HCT116 (cell line): ENCODE measurements at regions of chr12 and their contacts with region 1.

Region 1: DNA sequence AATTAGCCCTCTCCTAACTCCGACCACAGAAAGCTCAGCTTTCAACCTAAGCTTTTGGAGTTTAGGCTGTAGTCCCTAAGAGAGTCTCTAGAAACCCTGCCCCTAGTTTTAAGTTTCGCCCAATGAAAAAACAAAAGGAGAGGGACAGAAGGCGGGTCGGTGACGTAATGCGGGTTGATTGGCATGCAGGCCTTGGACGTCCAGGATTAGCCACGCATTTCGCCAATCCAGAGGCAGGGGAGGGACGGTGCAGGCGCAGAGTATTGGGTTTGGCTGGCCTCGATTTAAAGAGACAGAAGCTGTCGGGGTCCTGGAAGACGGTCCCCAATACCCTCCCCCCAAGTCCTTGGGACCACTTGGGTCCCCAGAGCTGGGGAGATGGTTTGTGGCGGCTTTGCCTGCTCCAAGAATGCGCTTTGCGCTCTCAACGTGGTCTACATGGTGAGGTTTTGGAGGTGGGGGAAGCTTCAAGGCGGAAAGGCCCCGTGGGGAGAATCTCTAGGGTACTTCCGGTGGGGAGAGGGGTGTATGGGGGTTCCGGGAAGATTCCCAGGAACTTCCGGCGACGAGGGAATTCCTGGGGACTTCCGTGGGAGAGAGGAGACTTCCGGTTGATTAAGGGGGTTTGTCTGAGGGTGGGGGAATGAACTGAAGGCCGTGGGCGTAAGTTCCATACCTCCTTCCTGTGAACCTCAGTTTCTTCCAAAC is at the start of gene TSPAN31:
- DNase-seq: peak; percentile 98
- ATAC-seq: peak; percentile 83
- H3K4me3 ChIP-seq: peak within 1 kb of the TSS; percentile 69 to 76
- H3K27ac ChIP-seq: peak within 1 kb of the TSS; percentile 76
- H3K4me1 ChIP-seq: peaks cover 10 to 36% of the 10 kb centered on the region in 2 experiments; a peak in 3 of 4 replicates
- H3K27me3 ChIP-seq: no peaks in the 10 kb centered on the region
- CTCF ChIP-seq: no peak
- POLR2A ChIP-seq: peak; percentile 49
- RAD21 ChIP-seq: no peak
- total RNA-seq, gene TSPAN31: 14.9 TPM

Region 2: GRCh38 chr12:57726151-57726883 is 18.6 kb before region 1 on chr12:
- CTCF ChIA-PET with region 1: interaction called, 11 read pairs
- POLR2A ChIA-PET with region 1: interaction called, 7 read pairs
- RAD21 ChIA-PET with region 1: no interaction called
- intact Hi-C with region 1: loop called (anchors 2 kb)
- DNase-seq: peak; percentile 72
- ATAC-seq: peak; percentile 94
- H3K4me3 ChIP-seq: peak overlapping the region; percentile 85 to 89
- H3K27ac ChIP-seq: peak overlapping the region; percentile 92
- H3K4me1 ChIP-seq: peaks cover 7 to 18% of the 10 kb centered on the region in 2 experiments; a peak in 3 of 4 replicates
- H3K27me3 ChIP-seq: no peaks in the 10 kb centered on the region
- CTCF ChIP-seq: peak; percentile 76 to 95 (median 83)
- POLR2A ChIP-seq: no peak
- RAD21 ChIP-seq: peak; percentile 57

Region 3: DNA sequence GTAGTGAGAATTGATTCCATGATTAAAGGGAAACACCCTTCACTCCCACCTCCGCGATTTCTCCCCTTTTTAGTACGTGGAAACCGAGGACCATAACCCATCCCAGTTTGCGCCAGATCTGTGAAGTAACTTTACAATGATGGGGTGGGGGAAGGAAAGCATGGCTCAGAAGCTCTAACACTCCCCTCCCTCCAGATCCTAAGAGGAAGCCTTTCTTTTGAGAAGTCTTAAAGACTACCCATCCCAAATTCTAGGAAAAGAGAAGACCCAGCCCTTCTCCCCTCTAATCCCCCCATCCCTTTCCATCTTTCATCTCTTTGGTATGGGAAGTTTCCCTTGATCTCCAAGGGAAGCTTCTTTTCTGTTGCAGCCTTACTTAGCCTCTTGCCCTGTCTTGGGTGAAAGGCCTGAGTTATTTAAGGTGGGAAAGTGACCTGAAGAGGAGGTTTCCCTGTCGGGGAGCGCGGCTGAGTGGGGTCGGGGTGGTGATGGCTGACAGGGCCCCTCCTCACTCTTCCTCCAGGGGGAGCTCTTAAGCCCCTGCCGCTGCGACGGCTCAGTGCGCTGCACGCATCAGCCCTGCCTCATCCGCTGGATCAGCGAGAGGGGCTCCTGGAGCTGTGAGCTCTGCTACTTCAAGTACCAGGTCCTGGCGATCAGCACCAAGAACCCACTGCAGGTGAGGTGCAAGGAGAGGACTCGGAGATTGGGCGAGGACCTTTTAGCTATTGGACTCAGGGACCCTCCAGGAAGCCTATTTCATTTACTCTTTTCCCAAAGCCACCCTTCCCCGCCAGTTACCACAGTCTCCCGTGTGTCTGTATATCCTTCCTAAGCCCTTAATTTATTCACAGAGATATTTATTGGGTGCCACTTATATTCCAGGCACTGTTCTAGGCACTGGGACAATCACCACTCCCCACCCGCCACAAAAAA is 11.7 kb after region 1 on chr12:
- CTCF ChIA-PET with region 1: interaction called, 11 read pairs
- POLR2A ChIA-PET with region 1: interaction called, 7 read pairs
- RAD21 ChIA-PET with region 1: no interaction called
- intact Hi-C with region 1: no loop called
- DNase-seq: no peak
- ATAC-seq: peak; percentile 51
- H3K4me3 ChIP-seq: peak overlapping the region; percentile 59 to 64
- H3K27ac ChIP-seq: no peak overlapping the region
- H3K4me1 ChIP-seq: peaks cover 20 to 37% of the 10 kb centered on the region in 2 experiments
- H3K27me3 ChIP-seq: no peaks in the 10 kb centered on the region
- CTCF ChIP-seq: peak in 2 of 3 experiments; percentile 89 to 96; a peak in 4 of 6 replicates
- POLR2A ChIP-seq: no peak
- RAD21 ChIP-seq: no peak